ENCODE measurements at regions of chr3 and their contacts with region 1.

Region 1: GRCh38 chr3:45167011-45167911 is 21.1 kb upstream of the CDCP1 start:
- DNase-seq: peak; percentile 93
- H3K4me3 ChIP-seq: peak overlapping the region in 1 of 3 experiments; percentile 28
- H3K27ac ChIP-seq: peak overlapping the region; percentile 97
- H3K4me1 ChIP-seq: peaks cover 22% of the 10 kb centered on the region
- H3K27me3 ChIP-seq: no peaks in the 10 kb centered on the region
- CTCF ChIP-seq: no peak
- POLR2A ChIP-seq: peak; percentile 11

Region 2: GRCh38 chr3:44883999-44884431 is 283.2 kb before region 1 on chr3:
- CTCF ChIA-PET with region 1: no interaction called
- POLR2A ChIA-PET with region 1: no interaction called
- dilution Hi-C with region 1: no loop called
- intact Hi-C with region 1: loop called (anchors 1 kb)
- DNase-seq: peak; percentile 90
- H3K4me3 ChIP-seq: no peak overlapping the region
- H3K27ac ChIP-seq: peak overlapping the region; percentile 91
- H3K4me1 ChIP-seq: peaks cover 38% of the 10 kb centered on the region
- H3K27me3 ChIP-seq: no peaks in the 10 kb centered on the region
- CTCF ChIP-seq: no peak
- POLR2A ChIP-seq: no peak

Region 3: DNA sequence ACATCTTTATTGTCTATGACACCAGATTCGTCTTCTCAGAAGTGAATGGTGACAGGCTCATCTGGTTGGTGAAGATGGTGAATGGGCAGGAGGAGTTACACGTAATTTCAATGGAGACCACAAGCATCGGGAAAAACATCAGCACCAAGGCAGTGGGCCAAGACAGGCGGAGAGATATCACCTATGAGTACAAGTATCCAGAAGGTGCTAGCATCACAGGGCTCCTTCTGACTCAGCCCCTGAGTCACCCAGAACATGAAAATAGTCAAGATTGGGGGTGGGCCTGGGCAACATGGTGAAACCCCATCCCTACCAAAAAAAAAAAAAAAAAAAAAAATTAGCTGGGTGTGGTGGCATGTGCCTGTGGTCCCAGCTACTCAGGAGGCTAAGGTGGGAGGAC is 260.3 kb before region 1 on chr3:
- CTCF ChIA-PET with region 1: no interaction called
- POLR2A ChIA-PET with region 1: no interaction called
- dilution Hi-C with region 1: no loop called
- intact Hi-C with region 1: no loop called
- DNase-seq: no peak
- H3K4me3 ChIP-seq: no peak overlapping the region
- H3K27ac ChIP-seq: no peak overlapping the region
- H3K4me1 ChIP-seq: no peaks in the 10 kb centered on the region
- H3K27me3 ChIP-seq: peaks cover 0 to 10% of the 10 kb centered on the region in 2 experiments
- CTCF ChIP-seq: no peak
- POLR2A ChIP-seq: no peak

Region 4: GRCh38 chr3:45064512-45065372 is 102.5 kb before region 1 on chr3:
- CTCF ChIA-PET with region 1: no interaction called
- POLR2A ChIA-PET with region 1: no interaction called
- dilution Hi-C with region 1: no loop called
- intact Hi-C with region 1: loop called (anchors 1 kb)
- DNase-seq: peak; percentile 81
- H3K4me3 ChIP-seq: peak overlapping the region in 1 of 3 experiments; percentile 13
- H3K27ac ChIP-seq: peak overlapping the region; percentile 64
- H3K4me1 ChIP-seq: peaks cover 16% of the 10 kb centered on the region
- H3K27me3 ChIP-seq: no peaks in the 10 kb centered on the region
- CTCF ChIP-seq: no peak
- POLR2A ChIP-seq: no peak

Region 5: GRCh38 chr3:45132568-45133211 is 34.6 kb before region 1 on chr3:
- CTCF ChIA-PET with region 1: interaction called, 3 read pairs
- POLR2A ChIA-PET with region 1: no interaction called
- dilution Hi-C with region 1: no loop called
- intact Hi-C with region 1: loop called (anchors 1 kb)
- DNase-seq: no peak
- H3K4me3 ChIP-seq: no peak overlapping the region
- H3K27ac ChIP-seq: no peak overlapping the region
- H3K4me1 ChIP-seq: no peaks in the 10 kb centered on the region
- H3K27me3 ChIP-seq: no peaks in the 10 kb centered on the region
- CTCF ChIP-seq: no peak
- POLR2A ChIP-seq: no peak

Region 6: GRCh38 chr3:45224824-45225464 is 57.7 kb after region 1 on chr3:
- CTCF ChIA-PET with region 1: no interaction called
- POLR2A ChIA-PET with region 1: no interaction called
- dilution Hi-C with region 1: no loop called
- intact Hi-C with region 1: loop called (anchors 2 kb)
- DNase-seq: peak; percentile 64
- H3K4me3 ChIP-seq: peak overlapping the region; percentile 12 to 76 (median 45)
- H3K27ac ChIP-seq: no peak overlapping the region
- H3K4me1 ChIP-seq: peaks cover 10% of the 10 kb centered on the region
- H3K27me3 ChIP-seq: peaks cover 20 to 42% of the 10 kb centered on the region in 2 experiments
- CTCF ChIP-seq: peak; percentile 52 to 72
- POLR2A ChIP-seq: no peak

Region 7: GRCh38 chr3:45665101-45665572 is 497.9 kb after region 1 on chr3:
- CTCF ChIA-PET with region 1: no interaction called
- POLR2A ChIA-PET with region 1: no interaction called
- dilution Hi-C with region 1: no loop called
- intact Hi-C with region 1: loop called (anchors 5 kb)
- DNase-seq: peak; percentile 78
- H3K4me3 ChIP-seq: no peak overlapping the region
- H3K27ac ChIP-seq: peak overlapping the region; percentile 70
- H3K4me1 ChIP-seq: peaks cover 49% of the 10 kb centered on the region
- H3K27me3 ChIP-seq: no peaks in the 10 kb centered on the region
- CTCF ChIP-seq: peak; percentile 61 to 73
- POLR2A ChIP-seq: no peak

Measured in endothelial cell of umbilical vein (primary cell).